Right lobe of liver (tissue), 6 donors: ENCODE measurements at regions of chr2 and their contacts with region 1.

Region 1: DNA sequence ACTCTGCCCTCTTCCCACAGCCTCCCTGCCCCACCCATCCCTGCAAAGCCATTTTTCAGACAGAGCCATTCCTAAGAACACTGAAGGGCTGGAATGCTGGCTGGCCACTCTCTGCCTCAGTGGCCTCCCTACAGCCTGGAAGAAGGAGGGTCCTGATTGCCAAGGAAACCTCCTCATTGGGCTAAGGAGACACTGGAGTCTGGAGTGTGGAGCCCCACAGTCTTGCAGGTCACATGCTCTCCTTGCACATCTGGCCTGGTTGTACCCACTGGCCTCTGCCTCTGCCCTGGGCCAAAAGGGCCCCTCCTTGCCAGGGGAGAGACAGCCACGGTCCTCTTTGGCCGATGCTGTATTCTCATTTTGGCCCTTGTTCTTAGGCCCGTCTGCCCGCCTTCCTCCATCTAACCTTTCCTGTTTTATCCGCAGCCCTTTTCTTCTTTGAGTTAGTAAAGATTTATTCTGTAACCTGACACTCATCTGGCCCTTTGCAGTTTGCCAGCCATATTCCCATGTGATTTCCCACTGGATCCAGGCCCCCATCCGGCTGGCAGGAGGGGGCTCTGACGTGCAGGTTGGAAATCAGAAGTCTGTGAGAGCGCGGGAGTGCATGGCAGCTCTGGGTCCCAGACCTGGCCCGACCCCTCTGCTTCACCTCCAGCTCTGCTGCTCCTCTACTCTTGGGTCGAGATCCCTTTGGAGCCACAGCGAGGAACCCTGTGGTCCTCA is 11.0 kb upstream of the CATIP start:
- DNase-seq: peak in 1 of 3 donors; percentile 31
- ATAC-seq: peak in 1 of 4 donors; percentile 5
- H3K4me3 ChIP-seq: no peak overlapping the region
- H3K27ac ChIP-seq: no peak overlapping the region
- H3K4me1 ChIP-seq: peaks cover 0 to 10% (median 0%) of the 10 kb centered on the region in 4 donors
- H3K27me3 ChIP-seq: no peaks in the 10 kb centered on the region
- CTCF ChIP-seq: no peak
- POLR2A ChIP-seq: no peak

Region 2: GRCh38 chr2:218329826-218330593 is 15.6 kb before region 1 on chr2:
- intact Hi-C with region 1: loop called in 1 of 2 experiments (anchors 2 kb)
- DNase-seq: no peak
- ATAC-seq: no peak
- H3K4me3 ChIP-seq: no peak overlapping the region
- H3K27ac ChIP-seq: no peak overlapping the region
- H3K4me1 ChIP-seq: peaks cover 0 to 74% (median 21%) of the 10 kb centered on the region in 4 donors
- H3K27me3 ChIP-seq: no peaks in the 10 kb centered on the region
- CTCF ChIP-seq: no peak
- POLR2A ChIP-seq: no peak